CD8-positive, alpha-beta T cell (primary cell): ENCODE measurements at regions of chr13 and their contacts with region 1.

Region 1: GRCh38 chr13:80399340-80400163 is 58.6 kb upstream of the SPRY2 start:
- DNase-seq: peak in 2 of 9 experiments; percentile 22 to 55
- ATAC-seq: peak; percentile 59
- H3K4me3 ChIP-seq: no peak overlapping the region
- H3K4me3 Mint-ChIP-seq: peak overlapping the region; percentile 51
- H3K27ac ChIP-seq: no peak overlapping the region
- H3K27ac Mint-ChIP-seq: peak overlapping the region; percentile 20
- H3K4me1 ChIP-seq: peaks cover 4% of the 10 kb centered on the region
- H3K4me1 Mint-ChIP-seq: peaks cover 38% of the 10 kb centered on the region
- H3K27me3 ChIP-seq: no peaks in the 10 kb centered on the region
- H3K27me3 Mint-ChIP-seq: no peaks in the 10 kb centered on the region
- CTCF ChIP-seq: no peak

Region 2: DNA sequence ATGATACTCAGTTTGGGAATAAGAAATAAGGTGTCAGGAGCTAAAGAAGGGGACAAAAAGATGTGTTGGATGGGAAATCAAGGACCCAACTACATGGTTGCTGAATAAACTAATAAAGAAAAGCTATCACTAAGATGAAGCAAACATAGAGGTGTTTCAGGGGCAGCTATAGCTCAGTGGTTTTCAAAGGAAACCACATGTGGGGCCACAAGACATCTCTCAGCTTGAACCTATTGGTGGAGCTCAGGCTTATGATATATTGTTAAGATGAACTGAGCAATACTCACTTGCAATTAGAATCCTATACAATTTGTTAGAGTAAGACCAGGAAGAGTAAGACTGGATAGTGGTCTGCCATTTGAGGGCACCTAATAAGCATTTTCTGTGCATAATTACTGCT is 13.6 kb before region 1 on chr13:
- CTCF ChIA-PET with region 1: no interaction called
- POLR2A ChIA-PET with region 1: interaction called, 3 read pairs
- intact Hi-C with region 1: loop called in 1 of 2 experiments (anchors 1 kb)
- DNase-seq: peak in 2 of 9 experiments; percentile 45 to 67
- ATAC-seq: peak; percentile 42
- H3K4me3 ChIP-seq: no peak overlapping the region
- H3K4me3 Mint-ChIP-seq: no peak overlapping the region
- H3K27ac ChIP-seq: no peak overlapping the region
- H3K27ac Mint-ChIP-seq: no peak overlapping the region
- H3K4me1 ChIP-seq: no peaks in the 10 kb centered on the region
- H3K4me1 Mint-ChIP-seq: peaks cover 9% of the 10 kb centered on the region
- H3K27me3 ChIP-seq: no peaks in the 10 kb centered on the region
- H3K27me3 Mint-ChIP-seq: no peaks in the 10 kb centered on the region
- CTCF ChIP-seq: no peak

Region 3: GRCh38 chr13:80419416-80419815 is 19.9 kb after region 1 on chr13:
- CTCF ChIA-PET with region 1: no interaction called
- POLR2A ChIA-PET with region 1: no interaction called
- intact Hi-C with region 1: no loop called
- DNase-seq: no peak
- ATAC-seq: no peak
- H3K4me3 ChIP-seq: no peak overlapping the region
- H3K4me3 Mint-ChIP-seq: no peak overlapping the region
- H3K27ac ChIP-seq: no peak overlapping the region
- H3K27ac Mint-ChIP-seq: no peak overlapping the region
- H3K4me1 ChIP-seq: no peaks in the 10 kb centered on the region
- H3K4me1 Mint-ChIP-seq: peaks cover 5% of the 10 kb centered on the region
- H3K27me3 ChIP-seq: peaks cover 0 to 3% of the 10 kb centered on the region in 2 experiments
- H3K27me3 Mint-ChIP-seq: peaks cover 2% of the 10 kb centered on the region
- CTCF ChIP-seq: no peak

Region 4: DNA sequence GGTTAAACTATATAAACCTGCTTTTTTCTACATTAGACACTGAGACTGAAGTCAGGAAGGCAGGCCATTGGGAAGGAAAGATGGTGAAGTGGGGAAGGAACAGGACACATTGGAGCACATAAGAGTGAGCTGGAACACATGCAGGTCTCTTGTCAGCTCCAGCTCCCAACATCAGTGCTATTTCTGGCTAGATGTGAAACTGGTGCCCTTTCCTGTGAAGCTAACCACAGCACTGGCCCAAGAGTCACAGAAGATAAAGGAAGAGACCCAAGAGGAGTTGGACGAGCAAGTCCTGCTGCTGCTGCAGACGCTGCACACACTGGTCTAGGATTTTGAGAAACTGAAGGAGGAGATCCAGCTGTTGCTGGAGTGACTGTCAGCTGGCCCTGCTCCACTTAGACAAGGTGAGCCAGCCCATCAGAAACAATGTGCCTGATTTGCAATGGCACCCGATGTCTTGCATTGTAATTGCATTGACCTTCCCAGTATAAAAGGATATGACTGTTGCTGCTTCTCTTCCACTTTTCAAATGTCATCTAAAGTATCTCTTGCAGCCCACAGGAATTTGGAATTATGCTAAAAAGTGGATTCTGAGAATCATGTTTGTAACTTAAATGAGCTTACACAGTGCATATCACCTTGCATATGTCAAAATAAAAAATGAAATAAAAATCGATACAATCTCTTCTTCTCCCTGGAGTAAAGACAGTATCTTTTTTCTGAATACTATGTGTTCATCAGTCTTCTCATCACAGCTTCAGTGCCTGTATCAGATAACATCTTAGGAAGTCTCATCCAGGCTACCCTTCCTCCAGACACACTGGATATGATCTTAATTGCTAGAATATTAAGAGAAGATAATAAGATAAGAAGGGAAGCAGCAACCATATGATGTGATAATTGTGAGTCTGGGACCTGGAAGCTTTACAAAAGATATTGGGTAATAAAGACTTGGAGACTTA is 172.1 kb after region 1 on chr13:
- CTCF ChIA-PET with region 1: no interaction called
- POLR2A ChIA-PET with region 1: no interaction called
- intact Hi-C with region 1: no loop called
- DNase-seq: no peak
- ATAC-seq: no peak
- H3K4me3 ChIP-seq: no peak overlapping the region
- H3K4me3 Mint-ChIP-seq: no peak overlapping the region
- H3K27ac ChIP-seq: no peak overlapping the region
- H3K27ac Mint-ChIP-seq: no peak overlapping the region
- H3K4me1 ChIP-seq: no peaks in the 10 kb centered on the region
- H3K4me1 Mint-ChIP-seq: no peaks in the 10 kb centered on the region
- H3K27me3 ChIP-seq: no peaks in the 10 kb centered on the region
- H3K27me3 Mint-ChIP-seq: no peaks in the 10 kb centered on the region
- CTCF ChIP-seq: no peak